ENCODE measurements at regions of chr9 and their contacts with region 1.

Region 1: DNA sequence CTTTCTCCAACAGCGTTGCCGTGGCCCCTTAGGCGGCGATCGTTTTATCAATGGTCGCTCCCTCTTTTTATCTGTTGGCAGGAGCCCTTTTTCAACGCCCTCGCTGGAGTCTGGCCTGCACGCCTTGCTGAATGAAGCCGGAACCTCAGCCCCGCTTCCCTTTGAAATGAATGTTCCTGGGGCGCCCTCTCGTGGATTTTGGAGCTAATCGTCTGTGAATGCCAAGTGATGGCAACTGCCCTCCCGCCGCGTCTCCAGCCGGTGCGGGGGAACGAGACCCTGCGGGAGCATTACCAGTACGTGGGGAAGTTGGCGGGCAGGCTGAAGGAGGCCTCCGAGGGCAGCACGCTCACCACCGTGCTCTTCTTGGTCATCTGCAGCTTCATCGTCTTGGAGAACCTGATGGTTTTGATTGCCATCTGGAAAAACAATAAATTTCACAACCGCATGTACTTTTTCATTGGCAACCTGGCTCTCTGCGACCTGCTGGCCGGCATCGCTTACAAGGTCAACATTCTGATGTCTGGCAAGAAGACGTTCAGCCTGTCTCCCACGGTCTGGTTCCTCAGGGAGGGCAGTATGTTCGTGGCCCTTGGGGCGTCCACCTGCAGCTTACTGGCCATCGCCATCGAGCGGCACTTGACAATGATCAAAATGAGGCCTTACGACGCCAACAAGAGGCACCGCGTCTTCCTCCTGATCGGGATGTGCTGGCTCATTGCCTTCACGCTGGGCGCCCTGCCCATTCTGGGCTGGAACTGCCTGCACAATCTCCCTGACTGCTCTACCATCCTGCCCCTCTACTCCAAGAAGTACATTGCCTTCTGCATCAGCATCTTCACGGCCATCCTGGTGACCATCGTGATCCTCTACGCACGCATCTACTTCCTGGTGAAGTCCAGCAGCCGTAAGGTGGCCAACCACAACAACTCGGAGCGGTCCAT is 10.0 kb downstream of the S1PR3 start:
- DNase-seq: peak; percentile 83 to 87 (median 87)
- ATAC-seq: peak; percentile 84 to 91 (median 88)
- H3K4me3 ChIP-seq: no peak overlapping the region
- H3K27ac ChIP-seq: no peak overlapping the region
- H3K4me1 ChIP-seq: peaks cover 0 to 5% (median 2%) of the 10 kb centered on the region in 4 donors
- H3K27me3 ChIP-seq: no peaks in the 10 kb centered on the region
- CTCF ChIP-seq: peak; percentile 74 to 84 (median 80)
- POLR2A ChIP-seq: no peak

Region 2: GRCh38 chr9:88593537-88594185 is 407.6 kb before region 1 on chr9:
- intact Hi-C with region 1: loop called (anchors 5 kb)
- DNase-seq: peak in 1 of 3 donors; percentile 61
- ATAC-seq: peak; percentile 75 to 81 (median 78)
- H3K4me3 ChIP-seq: no peak overlapping the region
- H3K27ac ChIP-seq: no peak overlapping the region
- H3K4me1 ChIP-seq: no peaks in the 10 kb centered on the region
- H3K27me3 ChIP-seq: no peaks in the 10 kb centered on the region
- CTCF ChIP-seq: peak; percentile 59 to 78 (median 68)
- POLR2A ChIP-seq: no peak

Region 3: DNA sequence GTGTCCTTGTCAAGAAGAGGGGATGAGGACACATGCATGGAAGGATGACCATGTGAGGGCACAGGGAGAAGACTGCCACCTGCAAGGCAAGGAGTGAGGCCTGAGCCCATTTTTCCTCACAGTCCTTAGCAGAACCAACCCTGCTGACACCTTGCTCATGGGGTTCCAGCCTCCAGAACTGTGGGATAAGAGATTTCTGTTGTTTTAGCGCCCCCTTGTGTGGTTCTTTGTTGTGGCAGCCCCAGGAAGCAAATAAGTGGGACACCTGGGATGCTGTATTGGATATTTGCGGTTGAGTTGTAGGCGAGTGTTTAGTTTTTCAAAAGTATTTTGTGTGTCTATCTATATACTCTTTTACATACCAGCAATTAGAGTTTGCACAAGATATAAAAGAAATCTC is 259.9 kb before region 1 on chr9:
- intact Hi-C with region 1: no loop called
- DNase-seq: no peak
- ATAC-seq: peak in 1 of 4 donors; percentile 28
- H3K4me3 ChIP-seq: no peak overlapping the region
- H3K27ac ChIP-seq: no peak overlapping the region
- H3K4me1 ChIP-seq: no peaks in the 10 kb centered on the region
- H3K27me3 ChIP-seq: no peaks in the 10 kb centered on the region
- CTCF ChIP-seq: peak in 3 of 4 donors; percentile 5 to 43 (median 29)
- POLR2A ChIP-seq: no peak

Region 4: GRCh38 chr9:88775037-88775471 is 226.2 kb before region 1 on chr9:
- intact Hi-C with region 1: no loop called
- DNase-seq: no peak
- ATAC-seq: no peak
- H3K4me3 ChIP-seq: no peak overlapping the region
- H3K27ac ChIP-seq: no peak overlapping the region
- H3K4me1 ChIP-seq: no peaks in the 10 kb centered on the region
- H3K27me3 ChIP-seq: no peaks in the 10 kb centered on the region
- CTCF ChIP-seq: no peak
- POLR2A ChIP-seq: no peak

Measured in right lobe of liver (tissue), 6 donors.